A673 (cell line): ENCODE measurements at regions of chr13 and their contacts with region 1.

Region 1: DNA sequence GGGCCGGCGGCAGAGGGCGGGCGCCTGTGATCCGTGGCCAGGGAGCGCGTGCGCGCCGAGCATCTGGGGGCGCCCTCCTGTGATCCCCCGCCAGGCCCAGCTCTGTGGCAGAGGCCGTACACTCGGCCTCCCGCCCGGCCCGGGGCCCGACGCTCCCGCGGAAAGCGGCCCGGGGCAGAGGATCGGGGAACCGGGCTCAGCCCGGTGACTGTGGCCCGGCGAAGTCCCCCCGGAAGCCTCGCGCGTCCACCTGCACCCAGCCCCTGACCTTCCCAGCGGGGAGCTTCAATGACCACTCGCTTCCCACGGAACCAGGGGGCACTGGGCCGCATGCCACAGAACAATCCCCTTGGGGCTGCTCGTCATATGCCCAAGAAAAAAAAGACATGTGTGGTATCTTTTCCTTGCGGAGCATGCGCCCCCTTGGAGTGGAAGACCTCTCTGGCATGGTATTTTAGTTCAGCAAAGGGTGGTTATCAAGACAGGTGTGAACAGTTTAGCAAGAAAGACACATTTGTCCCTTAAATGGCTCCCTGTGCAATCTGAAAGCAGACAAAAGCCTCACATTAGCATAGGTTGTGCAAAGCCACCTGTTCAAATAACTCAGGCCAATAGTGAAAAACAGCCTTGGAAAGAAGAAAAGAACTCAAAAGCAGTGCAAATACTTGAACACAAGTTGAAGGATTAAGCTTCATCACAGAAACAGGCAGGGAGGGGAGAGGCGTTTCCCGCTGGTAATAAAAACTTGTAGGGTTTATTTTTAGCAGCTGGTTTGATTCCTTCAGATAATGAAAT is 290.9 kb upstream of the SOX21 start:
- DNase-seq: no peak
- H3K4me3 ChIP-seq: no peak overlapping the region
- H3K27ac ChIP-seq: no peak overlapping the region
- H3K4me1 ChIP-seq: peaks cover 6% of the 10 kb centered on the region
- H3K27me3 ChIP-seq: no peaks in the 10 kb centered on the region
- CTCF ChIP-seq: no peak

Region 2: GRCh38 chr13:94710881-94711560 is 292.2 kb before region 1 on chr13:
- CTCF ChIA-PET with region 1: interaction called, 11 read pairs
- POLR2A ChIA-PET with region 1: no interaction called
- intact Hi-C with region 1: no loop called
- DNase-seq: peak; percentile 64
- H3K4me3 ChIP-seq: peak overlapping the region; percentile 37
- H3K27ac ChIP-seq: no peak overlapping the region
- H3K4me1 ChIP-seq: peaks cover 12% of the 10 kb centered on the region
- H3K27me3 ChIP-seq: peaks cover 96% of the 10 kb centered on the region
- CTCF ChIP-seq: peak; percentile 36; the same call in 1 of the 2 replicates

Region 3: DNA sequence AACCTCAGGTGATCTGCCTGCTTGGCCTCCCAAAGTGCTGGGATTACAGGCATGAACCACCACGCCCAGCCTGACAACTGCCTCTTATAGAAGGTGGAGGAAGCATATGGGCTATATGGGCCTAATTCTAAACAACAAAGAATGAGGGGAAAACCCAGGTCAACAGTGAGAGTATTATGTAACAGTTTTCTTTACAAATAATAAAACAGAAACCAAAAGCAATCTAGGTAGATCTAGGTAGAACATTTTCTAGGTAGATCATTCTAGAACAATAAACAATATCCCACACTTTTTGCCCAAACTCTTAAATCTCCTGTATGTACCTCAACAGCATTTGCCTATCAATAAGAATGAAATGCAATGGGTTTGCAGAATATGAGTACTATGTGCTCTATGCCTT is 30.7 kb after region 1 on chr13:
- CTCF ChIA-PET with region 1: no interaction called
- POLR2A ChIA-PET with region 1: no interaction called
- intact Hi-C with region 1: no loop called
- DNase-seq: no peak
- H3K4me3 ChIP-seq: no peak overlapping the region
- H3K27ac ChIP-seq: no peak overlapping the region
- H3K4me1 ChIP-seq: peaks cover 9% of the 10 kb centered on the region
- H3K27me3 ChIP-seq: no peaks in the 10 kb centered on the region
- CTCF ChIP-seq: no peak

Region 4: GRCh38 chr13:95050800-95051615 is 47.8 kb after region 1 on chr13:
- CTCF ChIA-PET with region 1: no interaction called
- POLR2A ChIA-PET with region 1: no interaction called
- intact Hi-C with region 1: no loop called
- DNase-seq: no peak
- H3K4me3 ChIP-seq: no peak overlapping the region
- H3K27ac ChIP-seq: no peak overlapping the region
- H3K4me1 ChIP-seq: no peaks in the 10 kb centered on the region
- H3K27me3 ChIP-seq: no peaks in the 10 kb centered on the region
- CTCF ChIP-seq: no peak